Caco-2 (cell line): ENCODE measurements at regions of chr1 and their contacts with region 1.

Region 1: DNA sequence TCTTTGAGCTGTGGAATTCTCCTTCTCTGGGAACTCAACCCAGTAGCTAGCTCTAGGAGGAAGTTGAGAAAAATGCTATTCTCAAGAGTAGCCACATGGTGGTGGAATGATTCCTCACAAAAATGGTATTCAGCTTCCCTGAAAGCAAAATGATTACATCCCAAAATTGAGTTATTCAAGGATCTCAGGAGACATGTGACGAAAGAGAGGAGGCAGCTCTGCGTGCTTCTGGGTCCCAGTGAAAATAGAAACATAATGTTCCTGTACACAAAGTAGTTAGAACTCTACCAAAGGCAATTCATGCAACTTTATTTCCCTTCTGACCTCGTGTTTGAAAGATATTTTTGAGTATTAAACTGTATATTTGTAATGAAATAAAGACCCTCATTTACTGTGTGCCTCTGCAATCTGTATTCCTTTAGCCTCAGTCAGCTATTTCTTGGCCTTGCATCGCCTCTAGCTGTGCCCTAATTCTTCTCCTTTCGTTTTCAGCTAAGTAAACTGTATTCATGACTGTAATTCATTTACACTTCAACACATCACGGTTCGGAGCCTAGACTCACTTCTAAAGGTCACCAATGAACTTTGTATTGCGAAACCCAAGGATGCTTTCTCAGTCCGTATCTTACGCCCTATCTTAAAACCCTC is 167.3 kb downstream of the FASLG start:
- DNase-seq: peak in 1 of 2 experiments; percentile 52
- H3K4me3 ChIP-seq: no peak overlapping the region
- H3K4me3 Mint-ChIP-seq: no peak overlapping the region
- H3K27ac Mint-ChIP-seq: no peak overlapping the region
- H3K4me1 ChIP-seq: peaks cover 8% of the 10 kb centered on the region
- H3K4me1 Mint-ChIP-seq: no peaks in the 10 kb centered on the region
- H3K27me3 ChIP-seq: no peaks in the 10 kb centered on the region
- H3K27me3 Mint-ChIP-seq: no peaks in the 10 kb centered on the region
- CTCF ChIP-seq: peak; percentile 64 to 67

Region 2: DNA sequence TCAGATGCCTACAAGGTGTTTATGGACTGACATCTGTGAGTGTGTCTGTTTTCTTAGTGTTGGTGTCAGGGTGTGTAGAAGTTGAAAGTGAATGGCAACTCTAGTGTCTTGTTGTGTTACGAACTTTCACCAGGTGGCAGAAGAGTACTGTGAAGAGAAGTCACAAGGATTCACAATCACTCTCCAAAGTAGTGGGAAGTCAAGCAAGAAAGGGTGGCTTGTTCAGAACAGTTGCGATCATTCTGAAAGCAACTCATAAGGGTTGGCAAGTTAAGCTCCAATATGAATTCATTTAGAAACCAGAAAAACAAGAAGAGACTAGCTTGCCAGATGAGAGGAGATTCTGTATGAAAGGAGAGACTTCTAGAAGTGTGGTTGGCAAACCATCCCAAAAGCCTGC is 81.2 kb before region 1 on chr1:
- CTCF ChIA-PET with region 1: no interaction called
- POLR2A ChIA-PET with region 1: no interaction called
- intact Hi-C with region 1: loop called (anchors 1 kb)
- DNase-seq: peak; percentile 38 to 61
- H3K4me3 ChIP-seq: no peak overlapping the region
- H3K4me3 Mint-ChIP-seq: no peak overlapping the region
- H3K27ac Mint-ChIP-seq: no peak overlapping the region
- H3K4me1 ChIP-seq: peaks cover 10% of the 10 kb centered on the region
- H3K4me1 Mint-ChIP-seq: no peaks in the 10 kb centered on the region
- H3K27me3 ChIP-seq: no peaks in the 10 kb centered on the region
- H3K27me3 Mint-ChIP-seq: peaks cover 2% of the 10 kb centered on the region
- CTCF ChIP-seq: peak; percentile 62 to 63

Region 3: DNA sequence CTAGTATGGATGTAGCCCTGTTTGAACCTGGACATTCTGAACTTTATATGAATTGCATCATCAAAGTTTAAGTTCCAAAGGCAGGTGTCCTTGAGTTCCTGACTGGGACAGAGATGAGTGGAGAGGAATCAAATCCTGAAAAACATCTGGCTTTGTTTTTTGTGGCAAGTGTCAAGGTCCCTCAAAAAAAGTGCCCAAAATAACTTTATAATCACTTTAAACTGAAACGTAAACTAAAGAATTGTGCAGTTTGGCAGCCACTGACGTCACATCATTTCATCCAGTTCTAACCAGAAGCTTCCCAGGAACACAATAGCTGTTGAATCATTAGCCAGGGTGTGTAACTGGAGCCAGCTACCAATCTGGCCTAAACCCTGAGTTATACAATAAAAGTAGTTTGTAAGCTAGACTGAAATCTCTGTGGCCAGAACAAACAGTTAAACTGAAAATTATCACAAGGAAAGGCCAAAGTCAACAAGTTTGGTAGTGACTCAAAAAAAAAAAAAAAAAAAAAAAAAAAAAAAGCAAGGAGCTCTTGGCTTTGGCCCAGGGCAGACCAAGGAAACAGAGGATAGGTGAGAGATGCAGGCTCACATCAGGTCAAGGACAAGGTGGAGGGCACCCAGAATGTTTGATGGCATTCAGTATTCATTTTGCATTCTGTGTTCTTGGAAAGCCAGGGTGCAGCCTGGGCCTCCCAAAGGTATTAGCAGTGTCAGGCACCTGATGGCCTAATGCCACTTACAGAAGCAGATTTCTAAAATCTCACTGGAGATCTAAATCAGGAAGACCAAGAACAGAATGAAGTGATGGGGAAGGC is 150.2 kb after region 1 on chr1:
- CTCF ChIA-PET with region 1: no interaction called
- POLR2A ChIA-PET with region 1: no interaction called
- intact Hi-C with region 1: loop called (anchors 10 kb)
- DNase-seq: peak; percentile 67 to 71
- H3K4me3 ChIP-seq: no peak overlapping the region
- H3K4me3 Mint-ChIP-seq: peak overlapping the region; percentile 15
- H3K27ac Mint-ChIP-seq: peak overlapping the region; percentile 64
- H3K4me1 ChIP-seq: peaks cover 31% of the 10 kb centered on the region
- H3K4me1 Mint-ChIP-seq: peaks cover 35% of the 10 kb centered on the region
- H3K27me3 ChIP-seq: no peaks in the 10 kb centered on the region
- H3K27me3 Mint-ChIP-seq: no peaks in the 10 kb centered on the region
- CTCF ChIP-seq: no peak

Region 4: GRCh38 chr1:173122958-173123852 is 297.0 kb after region 1 on chr1:
- CTCF ChIA-PET with region 1: no interaction called
- POLR2A ChIA-PET with region 1: no interaction called
- intact Hi-C with region 1: loop called (anchors 5 kb)
- DNase-seq: peak; percentile 82 to 91
- H3K4me3 ChIP-seq: no peak overlapping the region
- H3K4me3 Mint-ChIP-seq: peak overlapping the region; percentile 66
- H3K27ac Mint-ChIP-seq: peak overlapping the region; percentile 93
- H3K4me1 ChIP-seq: peaks cover 51% of the 10 kb centered on the region
- H3K4me1 Mint-ChIP-seq: peaks cover 53% of the 10 kb centered on the region
- H3K27me3 ChIP-seq: no peaks in the 10 kb centered on the region
- H3K27me3 Mint-ChIP-seq: no peaks in the 10 kb centered on the region
- CTCF ChIP-seq: no peak

Region 5: DNA sequence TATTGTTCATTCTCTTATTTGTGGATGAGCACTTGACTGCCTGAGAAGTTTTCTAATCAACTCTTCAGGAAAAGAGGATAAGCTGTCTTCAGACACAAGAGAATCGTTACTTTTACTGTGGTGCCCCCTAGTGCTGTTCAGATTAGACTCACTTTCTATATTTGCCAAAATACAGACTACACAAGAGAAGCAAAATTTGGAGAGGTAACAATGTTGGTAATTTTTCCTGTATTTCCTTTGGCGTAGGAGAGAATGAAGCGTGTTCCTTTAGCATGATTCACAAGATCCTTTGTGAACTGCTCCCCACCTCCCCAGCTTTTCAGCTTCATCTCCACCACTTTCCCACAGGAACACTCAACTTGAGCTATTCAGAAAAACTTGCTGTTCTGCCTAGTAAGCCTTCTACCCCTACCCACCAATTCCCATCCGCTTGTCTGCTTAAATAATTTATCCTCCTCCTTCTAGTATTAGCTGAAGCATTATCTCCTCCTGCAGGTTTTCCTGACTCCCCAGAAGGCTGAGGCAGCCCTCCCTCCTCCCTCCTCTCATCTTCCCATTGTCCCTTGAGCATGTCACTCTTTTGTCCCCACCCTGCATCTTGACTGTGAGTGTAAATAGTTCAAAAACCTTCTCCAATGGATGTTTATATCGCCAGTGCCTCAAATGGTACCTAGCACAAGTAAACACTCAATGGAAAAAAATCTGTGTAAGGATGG is 376.4 kb after region 1 on chr1:
- CTCF ChIA-PET with region 1: interaction called, 75 read pairs
- POLR2A ChIA-PET with region 1: no interaction called
- intact Hi-C with region 1: loop called (anchors 1 kb)
- DNase-seq: peak in 1 of 2 experiments; percentile 53
- H3K4me3 ChIP-seq: no peak overlapping the region
- H3K4me3 Mint-ChIP-seq: no peak overlapping the region
- H3K27ac Mint-ChIP-seq: no peak overlapping the region
- H3K4me1 ChIP-seq: no peaks in the 10 kb centered on the region
- H3K4me1 Mint-ChIP-seq: no peaks in the 10 kb centered on the region
- H3K27me3 ChIP-seq: no peaks in the 10 kb centered on the region
- H3K27me3 Mint-ChIP-seq: no peaks in the 10 kb centered on the region
- CTCF ChIP-seq: peak; percentile 65 to 66

Region 6: GRCh38 chr1:173409613-173410012 is 583.4 kb after region 1 on chr1:
- CTCF ChIA-PET with region 1: no interaction called
- POLR2A ChIA-PET with region 1: no interaction called
- intact Hi-C with region 1: loop called (anchors 10 kb)
- DNase-seq: no peak
- H3K4me3 ChIP-seq: no peak overlapping the region
- H3K4me3 Mint-ChIP-seq: no peak overlapping the region
- H3K27ac Mint-ChIP-seq: no peak overlapping the region
- H3K4me1 ChIP-seq: no peaks in the 10 kb centered on the region
- H3K4me1 Mint-ChIP-seq: no peaks in the 10 kb centered on the region
- H3K27me3 ChIP-seq: no peaks in the 10 kb centered on the region
- H3K27me3 Mint-ChIP-seq: no peaks in the 10 kb centered on the region
- CTCF ChIP-seq: no peak

Region 7: GRCh38 chr1:173420330-173420806 is 594.1 kb after region 1 on chr1:
- CTCF ChIA-PET with region 1: no interaction called
- POLR2A ChIA-PET with region 1: no interaction called
- intact Hi-C with region 1: loop called (anchors 1 kb)
- DNase-seq: peak; percentile 61 to 73
- H3K4me3 ChIP-seq: no peak overlapping the region
- H3K4me3 Mint-ChIP-seq: no peak overlapping the region
- H3K27ac Mint-ChIP-seq: no peak overlapping the region
- H3K4me1 ChIP-seq: peaks cover 21% of the 10 kb centered on the region
- H3K4me1 Mint-ChIP-seq: peaks cover 22% of the 10 kb centered on the region
- H3K27me3 ChIP-seq: no peaks in the 10 kb centered on the region
- H3K27me3 Mint-ChIP-seq: no peaks in the 10 kb centered on the region
- CTCF ChIP-seq: peak; percentile 69 to 85